T-cell (primary cell): ENCODE measurements at regions of chr9 and their contacts with region 1.

Region 1: GRCh38 chr9:76404401-76404800 is 10.2 kb upstream of the RFK start:
- DNase-seq: no peak
- ATAC-seq: no peak
- H3K4me3 ChIP-seq: no peak overlapping the region
- H3K4me3 Mint-ChIP-seq: no peak overlapping the region
- H3K27ac ChIP-seq: no peak overlapping the region
- H3K27ac Mint-ChIP-seq: no peak overlapping the region
- H3K4me1 ChIP-seq: peaks cover 0 to 3% of the 10 kb centered on the region in 2 experiments
- H3K4me1 Mint-ChIP-seq: peaks cover 9 to 23% (median 15%) of the 10 kb centered on the region in 3 donors
- H3K27me3 ChIP-seq: no peaks in the 10 kb centered on the region
- H3K27me3 Mint-ChIP-seq: no peaks in the 10 kb centered on the region

Region 2: DNA sequence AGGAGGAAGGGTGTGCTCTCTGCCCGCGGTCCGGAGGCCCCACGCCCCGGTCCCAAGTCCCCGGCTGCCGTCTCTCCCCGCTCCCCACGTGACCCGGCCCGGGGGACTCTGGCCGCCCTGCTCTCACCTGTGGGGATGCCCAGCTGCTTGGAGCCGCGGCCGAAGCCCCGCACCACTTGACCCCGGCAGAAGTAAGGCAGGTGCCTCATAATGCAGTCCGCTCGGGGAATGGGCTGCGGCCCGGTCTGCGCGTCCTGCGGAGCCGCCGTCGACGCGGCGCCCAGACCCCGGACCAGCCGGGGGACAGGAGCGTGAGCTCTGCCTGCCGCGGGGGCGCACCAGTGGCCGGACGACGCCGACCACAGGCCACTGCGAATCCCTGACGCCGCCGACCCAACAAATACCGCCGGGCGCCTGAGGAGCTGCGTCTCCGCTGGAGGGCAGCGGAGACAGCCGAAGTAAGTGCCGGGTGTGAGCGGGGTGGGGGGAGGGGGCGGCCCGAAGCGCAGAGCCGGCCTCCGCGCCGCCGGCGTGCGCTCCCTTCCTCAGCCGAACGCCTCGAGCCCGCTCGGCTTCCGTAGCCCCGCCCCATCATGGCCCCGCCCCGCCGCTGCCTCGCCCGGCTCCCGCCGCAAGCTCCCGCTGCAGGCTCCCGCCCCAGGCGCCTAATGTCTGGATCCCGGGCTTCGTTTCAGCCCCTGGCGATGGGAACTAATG is 10.3 kb before region 1 on chr9 and contains the start of gene RFK:
- CTCF ChIA-PET with region 1: interaction called, 4 to 13 read pairs
- POLR2A ChIA-PET with region 1: no interaction called
- DNase-seq: peak; percentile 78 to 95 (median 90)
- ATAC-seq: peak; percentile 87 to 95 (median 92)
- H3K4me3 ChIP-seq: peak within 1 kb of the TSS; percentile 98
- H3K4me3 Mint-ChIP-seq: peak within 1 kb of the TSS; percentile 91 to 99 (median 95)
- H3K27ac ChIP-seq: peak within 1 kb of the TSS; percentile 85
- H3K27ac Mint-ChIP-seq: peak within 1 kb of the TSS; percentile 98 to 99
- H3K4me1 ChIP-seq: peaks cover 4 to 21% of the 10 kb centered on the region in 2 experiments
- H3K4me1 Mint-ChIP-seq: peaks cover 32 to 40% (median 33%) of the 10 kb centered on the region in 3 donors
- H3K27me3 ChIP-seq: peaks cover 0 to 3% of the 10 kb centered on the region in 2 experiments
- H3K27me3 Mint-ChIP-seq: no peaks in the 10 kb centered on the region
- total RNA-seq, gene RFK: 8.9 to 13.5 (median 11.0) TPM

Region 3: GRCh38 chr9:76634356-76635022 is 230.1 kb after region 1 on chr9:
- CTCF ChIA-PET with region 1: no interaction called
- POLR2A ChIA-PET with region 1: no interaction called
- DNase-seq: no peak
- ATAC-seq: no peak
- H3K4me3 ChIP-seq: no peak overlapping the region
- H3K4me3 Mint-ChIP-seq: no peak overlapping the region
- H3K27ac ChIP-seq: no peak overlapping the region
- H3K27ac Mint-ChIP-seq: no peak overlapping the region
- H3K4me1 ChIP-seq: peaks cover 2 to 5% of the 10 kb centered on the region in 2 experiments
- H3K4me1 Mint-ChIP-seq: peaks cover 13 to 21% (median 18%) of the 10 kb centered on the region in 3 donors
- H3K27me3 ChIP-seq: no peaks in the 10 kb centered on the region
- H3K27me3 Mint-ChIP-seq: peaks cover 0 to 2% of the 10 kb centered on the region in 2 donors